Activated T-helper 1 cell treated with anti-CD3 and anti-CD28 coated beads, Interleukin-12 subunit alpha, Interleukin-12 subunit beta, Interleukin-2, Interleukin-4 antibody, amounts not matched to agents 30 ng/mL and 10 ng/mL and 1 ng/mL, durations not matched to agents 14 hours and 24 hours and 36 hours (primary cell): ENCODE measurements at regions of chr4 and their contacts with region 1.

Region 1: DNA sequence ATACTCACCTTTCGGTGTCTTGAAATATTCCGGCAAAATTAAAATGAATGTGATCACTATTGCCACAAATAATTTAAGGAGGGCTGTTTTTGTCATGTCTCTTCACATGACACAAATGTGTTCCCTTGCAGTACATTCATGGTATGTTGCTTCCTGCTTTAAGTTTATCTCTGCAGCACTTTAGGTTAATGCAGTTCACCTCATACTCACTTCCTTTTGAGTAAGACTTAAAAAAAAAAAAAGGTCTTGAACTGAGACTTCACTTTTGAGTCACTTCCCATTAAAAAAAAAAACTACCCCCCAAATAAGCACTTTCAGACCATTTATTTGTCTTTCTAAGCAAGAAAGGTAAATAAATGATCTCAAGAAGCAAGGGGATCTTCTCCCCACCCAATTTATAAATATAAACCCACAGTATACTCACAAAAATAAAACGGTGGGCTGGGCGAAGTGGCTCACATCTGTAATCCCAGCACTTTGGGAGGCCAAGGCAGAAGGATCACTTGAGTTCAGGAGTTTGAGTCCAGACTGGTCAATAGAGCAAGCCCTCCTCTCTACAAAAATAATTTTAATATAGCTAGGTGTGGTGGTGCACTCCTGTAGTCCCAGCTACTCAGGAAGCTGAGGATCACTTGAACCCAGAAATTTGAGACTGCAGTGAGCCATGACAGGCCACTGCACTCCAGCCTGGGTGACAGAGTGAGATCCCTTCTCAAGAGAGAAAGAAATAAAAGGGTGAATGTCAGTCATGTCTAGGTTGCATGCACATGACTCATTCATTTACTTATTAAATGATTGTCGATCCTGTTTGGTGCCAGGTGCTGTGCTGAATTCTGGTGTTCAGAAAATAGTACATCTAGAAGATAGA is at the start of gene TMEM156:
- DNase-seq: no peak
- H3K4me3 Mint-ChIP-seq: peak within 1 kb of the TSS; percentile 93
- H3K27ac Mint-ChIP-seq: peak within 1 kb of the TSS; percentile 87
- H3K4me1 Mint-ChIP-seq: peaks cover 46% of the 10 kb centered on the region
- H3K27me3 Mint-ChIP-seq: no peaks in the 10 kb centered on the region
- total RNA-seq, gene TMEM156: 27.7 and 29.4 TPM in 2 replicates

Region 2: DNA sequence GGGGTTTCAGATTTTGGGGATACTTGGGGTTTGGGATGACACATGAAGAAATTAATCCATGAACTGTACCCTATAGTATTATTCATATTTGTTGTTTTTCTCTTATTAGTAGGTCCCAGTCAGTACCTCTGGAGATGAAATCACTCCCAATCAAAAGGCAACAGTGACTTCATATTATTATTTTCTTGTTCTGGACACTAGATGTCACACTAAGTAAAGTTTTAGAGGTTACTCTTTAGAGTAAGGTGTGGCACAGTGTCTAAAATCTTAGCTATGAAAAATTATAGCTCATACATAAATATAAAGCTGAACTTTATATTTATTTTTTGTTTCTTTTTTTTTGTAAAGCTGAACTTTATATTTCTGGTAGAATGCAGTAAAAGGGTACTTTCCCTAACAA is 129.8 kb before region 1 on chr4:
- intact Hi-C with region 1: loop called (anchors 1 kb)
- DNase-seq: no peak
- H3K4me3 Mint-ChIP-seq: no peak overlapping the region
- H3K27ac Mint-ChIP-seq: no peak overlapping the region
- H3K4me1 Mint-ChIP-seq: peaks cover 35% of the 10 kb centered on the region
- H3K27me3 Mint-ChIP-seq: peaks cover 10% of the 10 kb centered on the region

Region 3: GRCh38 chr4:38958453-38959190 is 73.8 kb before region 1 on chr4:
- intact Hi-C with region 1: loop called (anchors 2 kb)
- DNase-seq: no peak
- H3K4me3 Mint-ChIP-seq: peak overlapping the region; percentile 46
- H3K27ac Mint-ChIP-seq: peak overlapping the region; percentile 96
- H3K4me1 Mint-ChIP-seq: peaks cover 62% of the 10 kb centered on the region
- H3K27me3 Mint-ChIP-seq: no peaks in the 10 kb centered on the region

Region 4: DNA sequence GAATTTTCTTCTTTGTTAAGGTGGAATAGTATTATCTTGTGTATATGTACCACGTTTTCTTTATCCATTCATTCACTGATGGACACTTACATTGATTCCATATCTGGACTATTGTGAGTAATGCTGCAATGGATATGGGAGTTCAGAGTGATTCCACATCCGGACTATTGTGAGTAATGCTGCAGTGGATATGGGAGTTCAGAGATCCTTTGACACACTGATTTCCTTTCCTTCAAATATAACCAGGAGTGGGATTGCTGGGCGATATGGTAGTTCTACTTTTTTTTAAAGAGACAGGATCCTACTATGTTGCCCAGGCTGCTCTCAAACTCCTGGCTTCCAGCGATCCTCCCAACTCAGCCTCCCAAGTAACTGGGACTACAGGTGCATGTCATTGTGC is 12.3 kb before region 1 on chr4:
- intact Hi-C with region 1: no loop called
- DNase-seq: no peak
- H3K4me3 Mint-ChIP-seq: no peak overlapping the region
- H3K27ac Mint-ChIP-seq: no peak overlapping the region
- H3K4me1 Mint-ChIP-seq: peaks cover 32% of the 10 kb centered on the region
- H3K27me3 Mint-ChIP-seq: no peaks in the 10 kb centered on the region

Region 5: DNA sequence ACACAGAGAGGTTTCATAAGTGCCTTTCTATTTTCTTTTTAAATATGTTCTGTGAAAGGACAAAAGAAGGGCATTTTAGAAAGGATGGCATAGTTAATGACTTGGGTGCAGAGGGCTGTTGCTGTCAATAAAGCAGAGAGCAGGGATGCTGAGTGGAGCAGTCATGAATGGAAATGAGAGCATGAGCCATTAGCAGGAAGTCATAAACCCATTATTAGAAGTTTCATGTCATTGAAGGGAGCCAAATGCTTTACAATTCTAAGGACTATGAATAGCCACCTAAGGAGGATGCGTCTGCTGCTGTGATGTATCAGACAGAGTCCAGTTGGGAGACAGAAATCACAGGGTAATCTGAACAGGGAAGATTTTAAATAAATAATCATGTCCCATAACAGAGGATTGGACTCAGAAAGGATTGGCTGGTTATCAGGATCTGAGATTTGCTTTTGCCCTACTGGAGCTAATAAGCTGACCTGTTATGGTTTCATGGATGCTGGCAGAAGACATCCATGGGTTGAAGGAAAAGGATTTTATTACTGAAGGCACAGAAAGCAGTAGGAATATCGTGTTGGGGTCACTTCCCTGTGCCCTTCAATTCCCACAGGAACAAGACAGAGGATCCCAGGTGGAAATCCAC is 102.3 kb after region 1 on chr4:
- intact Hi-C with region 1: loop called (anchors 2 kb)
- DNase-seq: no peak
- H3K4me3 Mint-ChIP-seq: no peak overlapping the region
- H3K27ac Mint-ChIP-seq: no peak overlapping the region
- H3K4me1 Mint-ChIP-seq: peaks cover 19% of the 10 kb centered on the region
- H3K27me3 Mint-ChIP-seq: no peaks in the 10 kb centered on the region